HCT116 (cell line): ENCODE measurements at regions of chr6 and their contacts with region 1.

Region 1: DNA sequence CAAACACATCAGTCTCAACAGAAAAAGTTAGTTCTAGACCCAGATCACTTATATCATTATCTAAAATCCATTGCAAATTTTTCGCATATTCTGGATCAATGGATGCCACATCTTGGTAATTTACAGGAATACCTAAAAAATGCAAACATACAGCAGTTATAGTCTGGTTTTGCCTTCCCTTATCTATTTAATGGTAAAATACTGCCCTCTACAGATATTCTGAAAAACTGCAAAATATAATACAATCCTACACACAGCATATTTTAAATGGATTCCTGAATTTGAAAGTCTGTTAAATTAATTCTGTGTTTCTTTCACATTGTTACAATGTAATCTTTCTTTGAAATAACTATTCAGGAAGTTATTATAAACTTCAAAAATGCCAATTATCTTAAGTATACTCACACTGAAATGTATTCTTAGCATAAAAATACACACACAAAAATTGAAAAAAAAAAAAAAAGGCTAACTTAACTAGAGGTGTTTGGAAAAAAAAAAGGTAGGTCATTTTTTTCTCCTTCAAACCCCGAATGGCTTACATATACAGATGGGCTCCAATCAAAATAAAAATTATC is 88.4 kb downstream of the HACE1 start:
- DNase-seq: no peak
- ATAC-seq: peak; percentile 79
- H3K4me3 ChIP-seq: no peak overlapping the region
- H3K27ac ChIP-seq: no peak overlapping the region
- H3K4me1 ChIP-seq: no peaks in the 10 kb centered on the region
- H3K27me3 ChIP-seq: no peaks in the 10 kb centered on the region
- CTCF ChIP-seq: peak; percentile 28 to 74 (median 39); a peak in 5 of 6 replicates
- POLR2A ChIP-seq: no peak
- RAD21 ChIP-seq: peak; percentile 58

Region 2: DNA sequence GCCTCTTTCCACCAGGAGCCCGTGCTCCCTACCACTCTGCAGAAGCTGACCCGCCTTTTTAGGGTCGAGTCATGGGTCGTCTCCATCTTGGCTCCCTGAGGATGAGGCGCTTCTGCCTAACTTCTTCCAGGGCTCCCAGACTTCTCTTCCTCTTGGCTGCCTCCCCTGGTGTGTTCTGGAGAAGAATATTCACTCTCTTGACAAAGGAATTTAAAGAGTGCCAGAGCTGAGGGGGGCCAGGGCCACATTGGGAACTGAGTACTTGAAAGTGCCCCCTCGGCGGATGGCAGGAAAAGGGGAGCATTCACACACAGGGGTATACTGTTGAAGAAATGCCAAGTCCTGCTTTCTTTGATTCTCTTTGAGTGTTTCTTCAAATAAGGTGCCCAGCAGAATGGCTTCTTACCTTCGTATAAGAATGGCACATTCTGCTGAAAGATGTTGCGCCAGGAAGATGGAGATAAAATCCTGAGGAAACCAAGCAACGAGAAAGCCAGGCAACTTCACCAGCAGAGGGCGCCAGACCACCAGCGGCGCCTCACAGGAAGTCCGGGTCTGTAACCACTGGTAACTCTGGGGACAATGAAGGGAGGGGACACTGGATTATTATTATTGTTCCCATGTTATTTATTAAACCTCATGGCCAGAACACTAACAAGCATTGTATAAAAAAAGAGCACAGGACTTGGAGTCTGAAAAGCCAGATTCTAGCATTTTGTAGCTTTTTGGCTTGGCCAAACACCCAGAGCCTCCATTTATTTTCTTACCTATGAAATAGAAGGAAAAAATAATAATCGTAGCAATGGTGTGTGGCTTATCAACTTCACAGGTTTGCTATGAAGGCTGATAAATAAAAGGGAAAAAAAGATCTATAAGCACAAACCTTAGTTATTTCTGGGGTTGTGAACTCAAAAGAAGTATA is 88.4 kb before region 1 on chr6:
- CTCF ChIA-PET with region 1: interaction called, 4 read pairs
- POLR2A ChIA-PET with region 1: no interaction called
- RAD21 ChIA-PET with region 1: no interaction called
- intact Hi-C with region 1: loop called (anchors 2 kb)
- DNase-seq: peak; percentile 53
- ATAC-seq: peak; percentile 95
- H3K4me3 ChIP-seq: no peak overlapping the region
- H3K27ac ChIP-seq: no peak overlapping the region
- H3K4me1 ChIP-seq: no peaks in the 10 kb centered on the region; a peak in 1 of 4 replicates
- H3K27me3 ChIP-seq: no peaks in the 10 kb centered on the region
- CTCF ChIP-seq: peak; percentile 69 to 96 (median 92); a peak in 5 of 6 replicates
- POLR2A ChIP-seq: no peak
- RAD21 ChIP-seq: peak; percentile 81